Activated naive CD4-positive, alpha-beta T cell treated with anti-CD3 and anti-CD28 coated beads for 36 hours (primary cell): ENCODE measurements at regions of chr9 and their contacts with region 1.

Region 1: GRCh38 chr9:33374634-33375213 is 27.6 kb downstream of the AQP7 start:
- DNase-seq: peak; percentile 88
- H3K4me3 Mint-ChIP-seq: no peak overlapping the region
- H3K27ac Mint-ChIP-seq: no peak overlapping the region
- H3K4me1 Mint-ChIP-seq: peaks cover 7% of the 10 kb centered on the region
- H3K27me3 Mint-ChIP-seq: no peaks in the 10 kb centered on the region

Region 2: GRCh38 chr9:33320568-33321261 is 54.0 kb before region 1 on chr9:
- CTCF ChIA-PET with region 1: interaction called, 15 read pairs
- intact Hi-C with region 1: no loop called
- DNase-seq: peak; percentile 57
- H3K4me3 Mint-ChIP-seq: no peak overlapping the region
- H3K27ac Mint-ChIP-seq: peak overlapping the region; percentile 85
- H3K4me1 Mint-ChIP-seq: peaks cover 21% of the 10 kb centered on the region
- H3K27me3 Mint-ChIP-seq: no peaks in the 10 kb centered on the region

Region 3: DNA sequence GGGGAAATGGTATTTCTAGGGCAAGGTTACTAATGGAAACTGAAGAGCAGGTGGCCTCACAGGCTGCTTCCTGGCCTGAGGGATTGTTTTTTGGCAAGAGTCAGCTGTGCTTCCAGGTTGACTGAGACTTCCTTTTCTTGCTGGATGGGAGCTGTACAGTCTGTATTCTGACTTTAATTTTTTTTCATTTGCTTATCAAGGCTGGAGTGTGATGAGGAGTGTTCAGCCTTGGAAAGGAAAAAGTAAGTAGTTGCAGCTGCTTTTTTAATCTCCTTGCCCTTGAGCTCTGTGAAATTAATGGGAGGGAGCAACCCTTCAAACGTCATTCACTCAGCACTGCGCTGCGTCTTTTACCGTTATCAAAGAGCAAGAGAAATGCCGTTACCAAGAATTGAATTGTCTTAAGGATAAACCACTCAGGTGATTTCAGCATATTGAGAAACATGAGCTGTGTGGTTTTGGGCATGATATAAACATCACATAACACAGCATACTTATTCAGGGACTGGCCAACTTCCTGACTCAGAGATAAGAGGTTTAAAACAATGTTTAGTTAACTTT is 20.0 kb before region 1 on chr9:
- CTCF ChIA-PET with region 1: interaction called, 27 read pairs
- intact Hi-C with region 1: no loop called
- DNase-seq: no peak
- H3K4me3 Mint-ChIP-seq: no peak overlapping the region
- H3K27ac Mint-ChIP-seq: peak overlapping the region; percentile 75
- H3K4me1 Mint-ChIP-seq: no peaks in the 10 kb centered on the region
- H3K27me3 Mint-ChIP-seq: no peaks in the 10 kb centered on the region

Region 4: DNA sequence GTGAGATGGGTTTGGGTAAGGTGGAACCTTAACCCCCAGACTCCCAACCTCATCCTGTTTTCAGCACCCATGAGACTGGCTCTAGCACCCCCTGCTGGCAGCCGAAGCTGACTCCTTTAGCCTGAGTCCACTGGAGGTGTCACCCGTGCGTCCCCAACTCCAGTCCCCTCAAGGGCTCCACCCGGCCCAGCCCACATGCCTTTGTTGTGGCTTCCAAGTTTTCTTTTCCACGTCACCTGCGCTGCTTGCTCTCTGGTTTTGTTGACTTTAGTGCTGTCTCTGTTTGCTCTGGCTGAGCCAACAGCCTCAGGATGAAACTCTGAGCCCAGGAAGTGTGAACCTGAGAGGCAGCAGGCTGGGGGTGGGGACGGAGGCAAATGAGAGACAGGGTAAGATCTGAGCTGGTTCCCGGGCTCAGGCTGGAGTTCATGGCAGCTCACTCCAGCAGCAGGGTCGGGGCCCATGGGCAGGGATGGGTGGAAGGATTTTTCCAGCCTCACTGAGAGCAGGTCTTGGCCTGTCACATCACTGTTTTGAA is 40.8 kb after region 1 on chr9:
- CTCF ChIA-PET with region 1: interaction called, 84 read pairs
- intact Hi-C with region 1: loop called (anchors 1 kb)
- DNase-seq: peak; percentile 98
- H3K4me3 Mint-ChIP-seq: no peak overlapping the region
- H3K27ac Mint-ChIP-seq: peak overlapping the region; percentile 89
- H3K4me1 Mint-ChIP-seq: peaks cover 43% of the 10 kb centered on the region
- H3K27me3 Mint-ChIP-seq: no peaks in the 10 kb centered on the region

Region 5: GRCh38 chr9:33466565-33467495 is 92.1 kb after region 1 on chr9:
- CTCF ChIA-PET with region 1: interaction called, 87 read pairs
- intact Hi-C with region 1: loop called (anchors 1 kb)
- DNase-seq: peak; percentile 81
- H3K4me3 Mint-ChIP-seq: no peak overlapping the region
- H3K27ac Mint-ChIP-seq: peak overlapping the region; percentile 24
- H3K4me1 Mint-ChIP-seq: peaks cover 16% of the 10 kb centered on the region
- H3K27me3 Mint-ChIP-seq: no peaks in the 10 kb centered on the region

Region 6: DNA sequence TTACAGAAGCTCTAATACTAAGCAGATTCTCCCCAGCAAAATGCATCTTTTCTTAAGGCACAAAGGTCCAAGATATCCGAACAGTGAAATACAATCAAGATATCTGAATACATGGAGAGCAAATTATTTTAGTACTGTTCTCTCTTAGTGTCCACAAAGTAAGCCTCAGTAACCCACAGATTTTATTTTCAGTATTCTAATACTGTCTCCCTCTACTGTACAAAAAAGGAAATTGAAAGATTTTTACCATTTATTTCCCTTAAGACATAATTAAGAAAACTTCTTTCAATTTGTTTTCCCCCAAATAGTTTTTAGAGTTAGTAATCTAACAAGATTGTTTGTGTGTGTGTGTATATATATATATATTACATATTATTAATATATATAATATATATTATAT is 123.7 kb after region 1 on chr9:
- CTCF ChIA-PET with region 1: interaction called, 3 read pairs
- intact Hi-C with region 1: loop called (anchors 1 kb)
- DNase-seq: no peak
- H3K4me3 Mint-ChIP-seq: no peak overlapping the region
- H3K27ac Mint-ChIP-seq: no peak overlapping the region
- H3K4me1 Mint-ChIP-seq: no peaks in the 10 kb centered on the region
- H3K27me3 Mint-ChIP-seq: no peaks in the 10 kb centered on the region

Region 7: DNA sequence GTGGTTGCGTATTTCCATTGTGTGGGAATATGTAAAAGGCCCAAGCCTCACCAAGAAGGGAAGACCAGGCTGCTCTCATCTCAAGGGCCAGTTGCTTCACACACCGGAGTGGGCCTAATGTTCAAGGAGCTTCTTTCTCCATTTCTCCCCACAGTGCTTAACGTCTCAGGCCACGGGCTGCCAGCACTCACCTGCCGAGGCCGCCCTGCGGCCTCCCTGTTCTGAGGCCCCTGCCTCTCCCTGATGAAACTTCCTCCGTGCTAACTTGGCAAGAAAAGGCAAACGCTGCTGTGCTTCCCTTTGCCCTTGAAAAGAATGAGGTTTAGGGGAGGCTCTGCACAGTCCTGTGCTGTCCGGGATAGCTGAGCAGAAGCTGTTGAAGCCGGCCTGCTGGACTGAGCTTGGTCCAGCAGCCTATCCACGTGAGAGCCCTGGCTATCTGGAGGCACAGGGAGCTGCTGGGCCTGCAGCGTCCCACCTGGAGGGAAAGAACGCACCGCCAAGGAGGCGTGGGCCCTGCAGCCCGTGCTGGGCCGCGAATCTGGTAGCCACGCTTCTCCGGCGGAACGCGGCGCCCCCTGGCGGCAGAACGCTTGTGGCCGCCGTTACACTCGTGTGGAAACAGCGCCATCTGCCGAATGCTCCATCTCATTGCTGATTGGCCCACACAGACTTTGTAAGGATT is 347.1 kb after region 1 on chr9:
- CTCF ChIA-PET with region 1: interaction called, 14 read pairs
- intact Hi-C with region 1: loop called (anchors 1 kb)
- DNase-seq: peak; percentile 90
- H3K4me3 Mint-ChIP-seq: no peak overlapping the region
- H3K27ac Mint-ChIP-seq: no peak overlapping the region
- H3K4me1 Mint-ChIP-seq: no peaks in the 10 kb centered on the region
- H3K27me3 Mint-ChIP-seq: peaks cover 7% of the 10 kb centered on the region